ENCODE measurements at regions of chr15 and their contacts with region 1.

Region 1: DNA sequence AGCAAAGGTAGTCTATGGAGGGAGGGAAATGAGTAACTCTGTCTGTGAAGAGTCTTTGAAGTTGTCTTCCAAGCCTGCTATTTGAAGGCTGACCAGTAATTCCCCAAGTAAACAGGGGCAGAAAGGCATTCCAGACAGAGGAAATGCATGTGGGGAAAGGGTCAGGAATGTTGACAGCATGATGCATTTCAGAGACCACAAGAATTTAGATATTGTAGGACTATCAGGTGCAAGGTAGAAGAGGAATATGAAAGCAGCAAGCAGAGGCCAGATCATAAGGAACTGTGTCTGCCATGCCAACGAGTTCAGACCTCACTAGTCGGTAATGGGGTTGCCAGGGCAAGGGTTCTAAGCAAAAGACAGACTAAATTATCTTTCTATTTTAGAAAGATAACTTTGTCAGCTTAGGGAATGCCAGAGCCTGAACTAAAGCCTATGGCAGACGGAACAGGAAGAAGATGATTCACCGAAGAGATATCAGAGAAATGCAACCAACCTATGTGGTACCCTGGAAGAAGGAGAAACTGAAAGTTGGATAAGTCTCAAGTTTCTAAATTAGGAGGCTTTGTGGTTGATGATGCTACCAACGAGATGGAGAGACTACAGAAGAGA is 327.0 kb upstream of the RORA start:
- DNase-seq: no peak
- ATAC-seq: peak in 1 of 2 donors; percentile 31

Region 2: DNA sequence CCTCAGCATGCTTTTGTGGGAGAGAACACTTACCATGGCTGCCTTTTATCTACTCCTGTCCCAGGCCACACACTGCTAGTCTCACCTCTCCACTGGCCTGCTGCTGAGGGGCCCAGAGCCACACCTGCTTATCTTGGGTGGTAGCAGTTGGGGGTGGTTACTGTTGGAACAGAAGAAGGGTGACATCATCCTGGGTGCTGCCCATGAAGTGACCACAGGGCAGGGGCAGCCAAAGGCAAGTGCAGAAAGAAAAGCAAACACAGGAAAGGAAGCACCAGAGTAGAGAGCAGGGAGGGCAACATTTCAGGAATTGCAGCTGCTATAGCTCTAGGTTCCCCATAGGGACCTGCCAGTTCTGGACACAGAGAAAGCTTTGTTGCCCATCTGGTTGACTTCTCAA is 158.9 kb after region 1 on chr15:
- intact Hi-C with region 1: loop called in 1 of 2 experiments (anchors 10 kb)
- DNase-seq: no peak
- ATAC-seq: peak; percentile 34 to 90

Measured in left cardiac atrium (tissue), 4 donors.